Ascending aorta (tissue), 2 donors: ENCODE measurements at regions of chr16 and their contacts with region 1.

Region 1: GRCh38 chr16:69709456-69710084 is 16.8 kb downstream of the NQO1 start:
- DNase-seq: no peak
- H3K4me3 ChIP-seq: no peak overlapping the region
- H3K27ac ChIP-seq: peak overlapping the region; percentile 22 to 61
- H3K4me1 ChIP-seq: peaks cover 0 to 15% of the 10 kb centered on the region in 2 donors
- H3K27me3 ChIP-seq: no peaks in the 10 kb centered on the region
- CTCF ChIP-seq: peak; percentile 48 to 72 (median 66)

Region 2: DNA sequence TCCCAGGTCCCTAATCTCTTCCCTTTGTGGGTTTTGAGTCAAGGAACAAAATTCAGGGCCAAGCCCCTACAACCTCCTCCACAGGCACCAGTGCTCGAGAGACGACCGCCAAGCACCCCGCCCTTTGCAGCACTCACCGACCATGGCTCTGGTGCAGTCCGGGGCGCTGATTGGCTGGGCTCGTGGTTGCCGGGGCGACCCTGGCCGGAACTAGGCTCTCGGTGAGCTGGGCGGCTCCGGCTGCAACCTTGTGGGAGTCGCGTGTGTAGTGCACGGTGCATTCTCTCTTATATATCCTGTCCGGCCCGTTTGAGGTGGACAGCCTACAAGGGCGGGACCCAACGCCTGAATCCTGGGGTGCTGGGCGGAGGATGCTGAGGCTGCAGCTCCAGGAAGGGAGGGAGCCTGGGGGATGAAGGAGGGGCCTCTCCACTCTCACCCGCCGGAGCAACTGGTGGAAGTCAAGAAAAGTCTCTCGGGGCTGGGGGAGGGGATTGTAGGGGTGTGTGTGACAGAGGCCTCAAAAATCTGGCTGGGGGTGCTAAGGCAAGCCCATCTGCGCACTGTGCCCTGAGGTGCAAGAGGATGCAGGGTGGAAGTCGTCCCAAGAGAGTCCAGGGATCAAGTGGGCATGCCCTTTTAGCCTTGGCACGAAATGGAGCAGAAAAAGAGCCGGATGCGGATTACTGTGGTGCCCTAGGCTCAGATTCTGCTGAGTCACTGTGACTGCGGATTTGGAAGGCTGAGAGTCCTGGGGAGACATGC is 16.9 kb after region 1 on chr16 and contains the start of gene NQO1:
- intact Hi-C with region 1: loop called (anchors 2 kb)
- DNase-seq: peak; percentile 79 to 95
- H3K4me3 ChIP-seq: peak within 1 kb of the TSS; percentile 58 to 68
- H3K27ac ChIP-seq: peak within 1 kb of the TSS; percentile 79 to 81
- H3K4me1 ChIP-seq: peaks cover 9 to 20% of the 10 kb centered on the region in 2 donors
- H3K27me3 ChIP-seq: no peaks in the 10 kb centered on the region
- CTCF ChIP-seq: no peak
- total RNA-seq, gene NQO1: 58.6 TPM